HEK293T (cell line): ENCODE measurements at regions of chr5 and their contacts with region 1.

Region 1: GRCh38 chr5:36414869-36415282 is 113.2 kb upstream of the RANBP3L start:
- DNase-seq: peak; percentile 56

Region 2: DNA sequence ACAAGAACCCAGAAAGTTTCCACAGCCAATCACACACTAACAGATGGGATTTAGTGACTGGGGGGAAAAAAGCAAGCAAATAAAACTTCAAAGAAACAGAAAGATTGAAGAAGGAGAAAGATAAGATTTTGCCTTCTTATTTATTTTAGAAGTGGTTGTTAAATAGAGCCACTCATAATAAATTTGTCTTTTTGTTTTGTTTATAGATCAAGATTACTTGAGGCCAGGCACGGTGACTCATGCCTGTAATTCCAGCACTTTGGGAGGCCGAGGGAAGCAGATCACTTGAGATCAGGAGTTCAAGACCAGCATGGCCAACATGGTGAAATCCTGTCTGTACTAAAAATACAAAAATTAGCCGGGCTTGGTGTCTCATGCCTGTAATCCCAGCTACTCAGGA is 18.2 kb before region 1 on chr5:
- CTCF ChIA-PET with region 1: no interaction called
- POLR2A ChIA-PET with region 1: no interaction called
- DNase-seq: no peak

Region 3: GRCh38 chr5:36507332-36507952 is 92.6 kb after region 1 on chr5:
- CTCF ChIA-PET with region 1: interaction called, 27 read pairs
- POLR2A ChIA-PET with region 1: no interaction called
- DNase-seq: peak; percentile 80

Region 4: GRCh38 chr5:36690041-36690961 is 275.4 kb after region 1 on chr5:
- CTCF ChIA-PET with region 1: interaction called, 20 read pairs
- POLR2A ChIA-PET with region 1: interaction called, 4 read pairs
- DNase-seq: peak; percentile 84

Region 5: GRCh38 chr5:36695677-36696673 is 281.1 kb after region 1 on chr5:
- CTCF ChIA-PET with region 1: interaction called, 20 read pairs
- POLR2A ChIA-PET with region 1: no interaction called
- DNase-seq: peak; percentile 65

Region 6: GRCh38 chr5:36928947-36929346 is 514.1 kb after region 1 on chr5:
- CTCF ChIA-PET with region 1: no interaction called
- POLR2A ChIA-PET with region 1: no interaction called
- DNase-seq: no peak